ENCODE measurements at regions of chr12 and their contacts with region 1.

Region 1: DNA sequence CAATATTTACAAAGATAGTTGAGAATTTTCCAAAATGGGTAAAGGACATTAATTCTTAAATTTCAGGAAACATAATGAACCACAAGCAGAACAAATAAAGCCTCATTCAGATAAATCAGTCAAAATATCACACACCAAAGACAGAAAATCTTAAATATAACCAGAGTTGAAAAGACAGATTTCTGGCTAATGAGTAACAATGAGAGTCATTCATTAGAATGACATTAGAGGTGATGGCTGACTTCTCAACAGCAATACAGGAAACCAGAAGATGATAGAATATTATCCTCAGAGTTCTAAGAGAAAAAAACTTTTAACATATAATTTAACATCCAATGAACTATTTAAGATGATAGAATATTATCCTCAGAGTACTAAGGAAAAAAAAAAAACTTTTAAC is 124.2 kb downstream of the DENND5B start:
- DNase-seq: no peak
- ATAC-seq: no peak
- H3K4me3 ChIP-seq: no peak overlapping the region
- H3K27ac ChIP-seq: no peak overlapping the region
- H3K4me1 ChIP-seq: no peaks in the 10 kb centered on the region
- H3K27me3 ChIP-seq: no peaks in the 10 kb centered on the region
- CTCF ChIP-seq: no peak

Region 2: DNA sequence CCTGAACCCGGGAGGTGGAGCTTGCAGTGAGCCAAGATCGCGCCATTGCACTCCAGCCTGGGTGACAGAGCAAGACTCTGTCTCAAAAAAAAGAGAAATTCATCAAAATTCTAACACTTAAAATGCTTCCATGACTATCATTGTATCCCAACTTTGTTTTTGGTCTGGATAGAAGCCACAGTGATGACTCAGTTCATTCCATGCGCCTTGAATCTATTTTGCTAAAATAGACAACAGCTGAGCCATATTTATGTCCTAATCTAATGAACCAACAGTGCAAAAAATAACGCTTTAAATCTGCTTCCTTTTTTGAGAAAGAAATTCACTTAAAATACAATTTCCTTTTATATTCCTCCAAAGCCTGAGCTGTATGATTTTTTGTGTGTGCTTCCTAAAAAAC is 616.7 kb after region 1 on chr12:
- intact Hi-C with region 1: loop called in 1 of 10 experiments (anchors 5 kb)
- DNase-seq: no peak
- ATAC-seq: peak in 1 of 8 donors; percentile 30
- H3K4me3 ChIP-seq: no peak overlapping the region
- H3K27ac ChIP-seq: no peak overlapping the region
- H3K4me1 ChIP-seq: no peaks in the 10 kb centered on the region
- H3K27me3 ChIP-seq: no peaks in the 10 kb centered on the region
- CTCF ChIP-seq: no peak